ENCODE measurements at regions of chr1 and their contacts with region 1.

Region 1: GRCh38 chr1:239803781-239804180 is 287.9 kb upstream of the FMN2 start:
- DNase-seq: no peak
- ATAC-seq: no peak
- H3K4me3 ChIP-seq: no peak overlapping the region
- H3K4me3 Mint-ChIP-seq: no peak overlapping the region
- H3K27ac ChIP-seq: no peak overlapping the region
- H3K27ac Mint-ChIP-seq: no peak overlapping the region
- H3K4me1 ChIP-seq: no peaks in the 10 kb centered on the region
- H3K4me1 Mint-ChIP-seq: peaks cover 13% of the 10 kb centered on the region
- H3K27me3 ChIP-seq: no peaks in the 10 kb centered on the region
- H3K27me3 Mint-ChIP-seq: no peaks in the 10 kb centered on the region
- CTCF ChIP-seq: no peak

Region 2: DNA sequence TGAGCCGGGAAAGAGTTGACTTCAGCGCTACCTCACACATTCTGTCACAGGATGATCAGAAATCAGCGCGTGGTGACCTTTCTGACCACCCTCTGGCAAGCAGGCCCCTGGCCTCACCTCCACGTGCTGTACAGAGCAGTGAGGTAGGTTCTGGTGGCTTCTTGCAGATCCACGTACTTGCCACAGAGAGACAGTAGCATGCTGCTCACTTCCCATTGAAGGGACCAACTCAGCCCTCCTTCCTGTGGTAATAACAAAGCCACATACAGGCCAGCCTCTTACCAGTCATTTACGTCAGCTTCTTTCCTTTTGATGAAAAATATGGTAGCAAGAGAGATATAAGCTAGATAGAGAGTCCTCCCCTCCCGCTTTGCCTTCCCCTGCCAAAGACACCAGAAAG is 216.7 kb before region 1 on chr1:
- CTCF ChIA-PET with region 1: no interaction called
- POLR2A ChIA-PET with region 1: no interaction called
- intact Hi-C with region 1: loop called in 1 of 2 experiments (anchors 1 kb)
- DNase-seq: peak in 11 of 14 experiments; percentile 1 to 69 (median 11)
- ATAC-seq: peak; percentile 97
- H3K4me3 ChIP-seq: no peak overlapping the region
- H3K4me3 Mint-ChIP-seq: no peak overlapping the region
- H3K27ac ChIP-seq: no peak overlapping the region
- H3K27ac Mint-ChIP-seq: peak overlapping the region; percentile 31
- H3K4me1 ChIP-seq: peaks cover 4% of the 10 kb centered on the region
- H3K4me1 Mint-ChIP-seq: peaks cover 19% of the 10 kb centered on the region
- H3K27me3 ChIP-seq: no peaks in the 10 kb centered on the region
- H3K27me3 Mint-ChIP-seq: no peaks in the 10 kb centered on the region
- CTCF ChIP-seq: no peak